ENCODE measurements at regions of chr4 and their contacts with region 1.

Region 1: DNA sequence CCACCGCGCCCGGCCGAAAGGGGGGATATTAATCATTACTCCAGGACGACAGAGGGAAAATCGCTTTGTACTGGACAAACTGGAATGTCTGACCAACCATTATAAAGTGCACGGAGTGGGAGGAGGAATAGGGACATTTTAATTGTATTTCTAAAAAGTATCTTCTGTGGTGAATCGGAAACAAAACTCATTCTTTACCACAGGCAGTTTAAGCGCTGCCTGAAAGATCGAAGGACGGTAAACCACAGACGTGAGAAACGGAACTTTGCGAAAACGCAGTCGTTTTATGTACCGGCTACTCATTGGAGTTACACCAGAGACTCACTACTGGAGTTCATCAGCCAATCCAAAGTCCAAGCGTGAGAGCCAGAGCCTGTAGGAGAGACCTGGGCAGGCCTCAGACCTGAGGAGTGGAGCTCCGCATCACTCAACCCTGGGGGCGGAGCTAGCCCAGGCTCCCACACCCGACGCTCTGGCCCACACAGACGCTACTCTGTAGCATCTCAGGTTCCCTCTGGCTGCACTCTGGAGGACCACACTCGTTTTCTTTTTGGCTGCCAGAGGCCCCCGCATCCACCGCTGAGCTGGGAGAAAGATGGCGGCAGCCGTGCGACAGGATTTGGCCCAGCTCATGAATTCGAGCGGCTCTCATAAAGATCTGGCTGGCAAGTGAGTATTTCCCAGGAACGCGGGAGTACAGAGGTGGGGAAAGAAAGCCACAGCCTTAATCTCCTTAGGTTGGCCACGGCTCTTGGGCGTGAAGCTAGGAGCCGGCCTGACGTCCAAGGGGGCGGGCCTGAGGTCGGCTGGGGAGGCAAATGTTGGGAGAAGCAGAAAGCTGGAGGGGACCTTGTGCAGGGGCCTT is at the start of gene COPS4:
- DNase-seq: peak; percentile 95
- H3K4me3 Mint-ChIP-seq: peak within 1 kb of the TSS; percentile 98
- H3K27ac Mint-ChIP-seq: peak within 1 kb of the TSS; percentile 99
- H3K4me1 Mint-ChIP-seq: peaks cover 20% of the 10 kb centered on the region
- H3K27me3 Mint-ChIP-seq: peaks cover 6% of the 10 kb centered on the region
- total RNA-seq, gene COPS4: 35.8 and 38.8 TPM in 2 replicates

Region 2: DNA sequence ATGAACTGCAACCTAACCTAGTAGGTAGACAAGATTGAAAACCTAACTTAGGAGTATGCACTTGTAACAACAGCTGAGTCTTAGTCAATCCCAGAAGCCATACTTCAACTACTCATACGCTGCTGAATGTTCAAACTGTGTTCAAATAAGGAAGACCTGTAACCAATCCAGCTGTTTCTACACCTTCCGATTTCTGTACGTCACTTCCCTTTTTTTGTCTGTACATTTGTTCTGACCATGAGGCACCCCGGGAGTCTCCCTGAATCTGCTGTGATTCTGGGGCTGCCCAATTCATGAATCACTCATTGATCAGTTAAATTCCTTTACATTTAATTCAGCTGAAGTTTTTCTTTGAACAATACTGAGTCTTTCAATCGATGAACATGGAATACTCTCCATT is 1914.8 kb before region 1 on chr4:
- intact Hi-C with region 1: no loop called
- DNase-seq: no peak
- H3K4me3 Mint-ChIP-seq: no peak overlapping the region
- H3K27ac Mint-ChIP-seq: no peak overlapping the region
- H3K4me1 Mint-ChIP-seq: no peaks in the 10 kb centered on the region
- H3K27me3 Mint-ChIP-seq: peaks cover 1% of the 10 kb centered on the region

Region 3: DNA sequence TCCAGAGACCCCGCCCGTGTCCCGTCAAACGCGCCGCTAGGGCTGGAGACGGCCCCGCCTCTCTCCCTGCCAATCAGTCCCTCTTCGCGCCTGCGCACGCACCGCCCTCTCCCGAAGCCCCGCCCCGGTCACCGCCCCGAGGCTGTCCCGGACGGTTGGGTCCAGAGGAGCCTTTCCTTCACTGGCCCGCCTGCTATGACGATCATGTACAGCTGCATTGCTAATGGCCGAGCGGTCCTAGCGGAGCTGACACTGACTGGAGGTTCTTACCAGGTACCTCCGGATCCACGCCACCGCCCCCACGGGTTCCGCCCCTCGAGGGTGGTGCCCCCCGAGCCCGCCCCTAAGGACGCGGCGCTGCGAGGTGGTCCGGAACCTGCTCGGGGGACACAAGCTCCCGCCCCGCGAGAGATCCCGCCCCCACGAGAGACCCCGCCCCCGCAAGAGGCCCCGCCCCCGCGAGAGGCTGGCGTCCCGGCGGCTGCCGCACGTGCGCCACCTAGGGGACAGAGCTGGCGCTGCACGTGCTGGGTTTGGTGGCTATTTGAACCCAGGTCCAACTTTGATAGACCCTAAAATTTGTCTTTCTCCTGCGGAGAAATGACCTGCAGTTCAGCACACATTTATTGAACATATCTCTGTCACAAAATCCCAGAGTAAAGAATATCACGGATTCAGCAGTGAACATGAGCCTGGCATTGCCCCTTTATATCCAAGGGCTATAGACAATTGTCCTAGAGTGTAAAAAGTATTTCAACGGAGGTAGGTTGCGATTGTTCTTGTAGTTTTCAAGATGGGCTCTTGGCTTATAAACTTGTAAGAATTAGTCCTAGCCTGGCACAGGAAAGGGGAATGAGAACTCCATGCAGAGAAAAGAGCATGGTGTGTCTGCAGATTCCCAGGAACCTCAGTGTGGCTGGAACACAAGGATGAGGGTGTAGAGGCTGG is 749.7 kb before region 1 on chr4:
- intact Hi-C with region 1: loop called (anchors 10 kb)
- DNase-seq: peak; percentile 99
- H3K4me3 Mint-ChIP-seq: peak overlapping the region; percentile 80
- H3K27ac Mint-ChIP-seq: peak overlapping the region; percentile 27
- H3K4me1 Mint-ChIP-seq: peaks cover 14% of the 10 kb centered on the region
- H3K27me3 Mint-ChIP-seq: peaks cover 24% of the 10 kb centered on the region

Region 4: GRCh38 chr4:82851885-82852750 is 182.7 kb before region 1 on chr4:
- intact Hi-C with region 1: loop called (anchors 5 kb)
- DNase-seq: no peak
- H3K4me3 Mint-ChIP-seq: no peak overlapping the region
- H3K27ac Mint-ChIP-seq: peak overlapping the region; percentile 73
- H3K4me1 Mint-ChIP-seq: peaks cover 14% of the 10 kb centered on the region
- H3K27me3 Mint-ChIP-seq: no peaks in the 10 kb centered on the region

Region 5: DNA sequence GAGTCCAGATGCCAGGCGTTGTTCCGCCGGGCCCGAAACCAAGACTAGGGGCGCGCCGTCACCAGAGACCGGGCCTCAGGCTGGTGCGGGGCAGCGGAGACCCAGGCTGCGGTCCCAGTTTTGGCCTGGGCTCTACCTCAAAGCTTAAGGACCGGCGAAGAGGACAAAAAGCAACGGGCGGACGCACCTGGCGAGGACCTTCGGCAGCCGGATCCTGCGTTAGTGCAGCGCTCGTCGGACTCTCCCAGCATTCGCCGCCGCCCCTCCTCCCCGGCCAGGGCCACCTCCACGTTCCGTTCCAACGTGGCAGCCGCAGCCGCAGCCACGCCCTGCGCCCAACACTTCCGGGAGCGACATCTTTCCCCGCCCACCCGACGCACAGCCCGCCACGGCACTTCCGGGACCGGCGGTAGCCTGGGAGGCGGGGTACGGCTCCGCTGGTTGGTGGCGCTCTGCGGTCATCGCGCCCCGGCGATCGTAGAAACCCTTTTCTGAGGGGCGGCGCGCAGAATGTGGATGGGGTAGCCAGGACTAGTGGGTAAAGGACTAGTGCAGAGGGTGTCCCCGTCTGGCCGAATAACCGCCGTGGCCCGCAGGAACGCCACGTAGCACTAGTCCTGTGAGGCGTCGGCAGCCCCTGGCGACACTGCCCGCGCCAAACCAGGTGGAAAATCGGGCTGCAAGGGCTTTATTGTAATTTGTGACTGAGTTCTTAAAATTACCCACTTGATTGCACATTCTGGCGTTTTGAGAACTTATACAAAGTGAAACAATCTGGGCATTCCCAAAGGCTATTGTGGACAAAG is 143.8 kb before region 1 on chr4 and contains the start of gene SEC31A:
- intact Hi-C with region 1: loop called (anchors 1 kb)
- DNase-seq: peak; percentile 96
- H3K4me3 Mint-ChIP-seq: peak within 1 kb of the TSS; percentile 88
- H3K27ac Mint-ChIP-seq: peak within 1 kb of the TSS; percentile 86
- H3K4me1 Mint-ChIP-seq: peaks cover 51% of the 10 kb centered on the region
- H3K27me3 Mint-ChIP-seq: no peaks in the 10 kb centered on the region
- total RNA-seq, gene SEC31A: 118 and 123 TPM in 2 replicates

Region 6: DNA sequence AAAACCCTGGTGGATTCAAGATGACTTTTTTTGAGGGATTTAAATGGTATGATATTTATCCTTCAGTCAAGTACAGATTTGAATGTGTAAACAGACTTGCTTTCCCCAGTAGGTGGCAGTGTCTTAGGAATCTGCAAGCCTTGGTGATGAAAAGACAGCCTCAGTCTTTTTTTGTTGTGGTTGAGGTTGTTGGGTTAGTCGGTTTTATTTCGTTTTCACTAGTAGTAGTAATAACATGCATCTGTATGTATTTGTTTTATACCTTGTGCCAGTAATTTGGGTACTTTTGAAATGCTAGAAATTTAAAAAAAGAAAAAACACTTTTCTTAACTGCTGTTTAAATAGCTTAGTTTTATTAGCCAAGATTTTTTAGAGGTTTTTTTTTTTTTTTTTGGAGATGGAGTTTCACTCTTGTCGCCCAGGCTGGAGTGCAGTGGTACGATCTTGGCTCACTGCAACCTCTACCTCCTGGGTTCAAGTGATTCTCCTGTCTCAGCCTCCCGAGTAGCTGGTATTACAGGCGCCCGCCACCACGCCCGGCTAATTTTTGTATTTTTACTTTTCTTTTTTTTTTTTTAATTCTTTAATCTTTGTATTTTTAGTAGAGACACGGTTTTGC is 39.3 kb after region 1 on chr4:
- intact Hi-C with region 1: loop called (anchors 2 kb)
- DNase-seq: peak; percentile 66
- H3K4me3 Mint-ChIP-seq: no peak overlapping the region
- H3K27ac Mint-ChIP-seq: peak overlapping the region; percentile 19
- H3K4me1 Mint-ChIP-seq: peaks cover 29% of the 10 kb centered on the region
- H3K27me3 Mint-ChIP-seq: no peaks in the 10 kb centered on the region

Region 7: GRCh38 chr4:83267121-83267829 is 232.4 kb after region 1 on chr4:
- intact Hi-C with region 1: no loop called
- DNase-seq: no peak
- H3K4me3 Mint-ChIP-seq: no peak overlapping the region
- H3K27ac Mint-ChIP-seq: no peak overlapping the region
- H3K4me1 Mint-ChIP-seq: peaks cover 16% of the 10 kb centered on the region
- H3K27me3 Mint-ChIP-seq: no peaks in the 10 kb centered on the region

Region 8: GRCh38 chr4:83484500-83485461 is 449.9 kb after region 1 on chr4 and contains the start of gene ABRAXAS1:
- intact Hi-C with region 1: loop called (anchors 1 kb)
- DNase-seq: peak; percentile 91
- H3K4me3 Mint-ChIP-seq: peak within 1 kb of the TSS; percentile 90
- H3K27ac Mint-ChIP-seq: peak within 1 kb of the TSS; percentile 95
- H3K4me1 Mint-ChIP-seq: peaks cover 10% of the 10 kb centered on the region
- H3K27me3 Mint-ChIP-seq: peaks cover under 1% of the 10 kb centered on the region
- total RNA-seq, gene ABRAXAS1: 11.0 and 11.3 TPM in 2 replicates

Region 9: DNA sequence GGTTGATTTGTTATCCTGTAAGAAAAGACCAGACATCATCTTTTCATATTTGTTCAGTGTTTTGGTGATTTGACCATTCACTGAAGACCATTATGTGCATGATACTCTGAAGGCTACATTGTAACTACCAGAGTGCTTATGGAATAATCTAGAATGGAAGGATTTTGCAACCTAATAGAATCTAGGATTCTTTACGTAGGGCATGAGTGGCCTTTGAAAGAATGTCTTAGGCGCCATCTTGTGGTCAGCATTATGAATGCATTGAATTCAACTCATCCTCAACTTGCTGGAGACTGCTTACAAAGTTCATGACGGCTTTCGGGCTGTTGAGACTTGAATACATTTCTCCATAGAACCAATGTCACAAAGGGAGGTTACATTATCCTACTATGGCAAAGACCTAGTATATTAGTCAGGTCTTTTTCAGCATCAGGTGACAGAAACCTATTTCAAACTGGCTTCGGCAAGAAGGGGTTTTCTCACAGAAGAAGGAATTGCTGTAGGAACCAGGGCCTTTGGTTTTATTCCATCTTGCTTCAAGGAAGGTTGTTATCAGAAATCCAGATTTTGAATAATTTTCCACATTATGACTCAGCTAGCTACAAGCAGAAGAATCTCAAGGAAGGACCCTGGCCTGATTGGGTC is 605.1 kb after region 1 on chr4:
- intact Hi-C with region 1: no loop called
- DNase-seq: peak; percentile 31
- H3K4me3 Mint-ChIP-seq: no peak overlapping the region
- H3K27ac Mint-ChIP-seq: no peak overlapping the region
- H3K4me1 Mint-ChIP-seq: peaks cover 4% of the 10 kb centered on the region
- H3K27me3 Mint-ChIP-seq: peaks cover 6% of the 10 kb centered on the region

Measured in activated T-helper 1 cell treated with anti-CD3 and anti-CD28 coated beads, Interleukin-12 subunit alpha, Interleukin-12 subunit beta, Interleukin-2, Interleukin-4 antibody, amounts not matched to agents 30 ng/mL and 10 ng/mL and 1 ng/mL, durations not matched to agents 14 hours and 24 hours and 36 hours (primary cell).